Mammary epithelial cell (primary cell): ENCODE measurements at regions of chr16 and their contacts with region 1.

Region 1: GRCh38 chr16:54633943-54634362 is 296.7 kb upstream of the IRX5 start:
- DNase-seq: peak; percentile 43
- H3K4me3 ChIP-seq: no peak overlapping the region
- H3K27ac ChIP-seq: peak overlapping the region; percentile 2
- H3K4me1 ChIP-seq: no peaks in the 10 kb centered on the region
- H3K27me3 ChIP-seq: no peaks in the 10 kb centered on the region
- CTCF ChIP-seq: peak; percentile 80 to 91

Region 2: GRCh38 chr16:53773150-53773846 is 860.7 kb before region 1 on chr16:
- CTCF ChIA-PET with region 1: no interaction called
- dilution Hi-C with region 1: no loop called
- in situ Hi-C with region 1: no loop called
- intact Hi-C with region 1: loop called (anchors 5 kb)
- DNase-seq: peak; percentile 72
- H3K4me3 ChIP-seq: no peak overlapping the region
- H3K27ac ChIP-seq: peak overlapping the region; percentile 11
- H3K4me1 ChIP-seq: peaks cover 60% of the 10 kb centered on the region
- H3K27me3 ChIP-seq: no peaks in the 10 kb centered on the region
- CTCF ChIP-seq: peak; percentile 70 to 81

Region 3: DNA sequence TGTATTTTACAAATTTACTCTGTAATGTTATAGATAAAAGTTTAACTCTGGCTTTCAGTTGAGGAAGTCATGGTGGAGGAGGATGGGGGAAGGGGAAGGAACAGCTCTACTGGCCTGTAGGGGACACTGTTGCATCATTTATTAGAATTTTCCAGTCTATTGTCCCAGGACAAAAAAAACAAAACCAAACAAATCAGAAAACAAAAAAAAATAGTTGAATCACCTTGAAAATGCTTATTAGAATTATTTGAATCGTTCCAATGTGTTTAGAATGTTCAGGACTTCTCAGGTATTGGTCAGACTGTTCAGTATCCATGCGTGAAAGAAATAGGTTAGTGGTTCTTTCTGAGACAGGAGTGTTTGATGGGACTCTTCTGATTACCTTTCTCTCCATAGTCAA is 688.0 kb before region 1 on chr16:
- CTCF ChIA-PET with region 1: no interaction called
- dilution Hi-C with region 1: no loop called
- in situ Hi-C with region 1: no loop called
- intact Hi-C with region 1: loop called (anchors 5 kb)
- DNase-seq: peak; percentile 43
- H3K4me3 ChIP-seq: no peak overlapping the region
- H3K27ac ChIP-seq: no peak overlapping the region
- H3K4me1 ChIP-seq: peaks cover 3% of the 10 kb centered on the region
- H3K27me3 ChIP-seq: no peaks in the 10 kb centered on the region
- CTCF ChIP-seq: peak; percentile 83 to 94

Region 4: DNA sequence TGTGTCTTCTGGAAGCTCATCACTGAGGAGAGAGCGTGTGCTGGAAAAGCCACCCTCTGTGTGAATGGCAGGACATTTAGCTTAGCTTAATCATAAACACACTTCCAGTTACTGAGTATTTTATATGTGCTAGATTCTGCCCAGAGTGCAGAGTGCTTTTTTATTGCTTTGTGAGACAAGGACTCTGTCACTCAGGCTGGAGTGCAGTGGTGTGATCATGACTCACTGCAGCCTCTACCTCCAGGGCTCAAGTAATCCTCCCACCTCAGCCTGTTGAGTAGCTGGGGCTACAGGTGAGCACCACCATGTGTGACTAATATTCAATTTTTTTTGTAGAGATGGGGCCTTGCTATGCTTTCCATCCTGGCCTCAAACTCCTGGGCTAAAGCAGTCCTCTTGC is 286.0 kb before region 1 on chr16:
- CTCF ChIA-PET with region 1: no interaction called
- dilution Hi-C with region 1: no loop called
- in situ Hi-C with region 1: no loop called
- intact Hi-C with region 1: no loop called
- DNase-seq: peak; percentile 78
- H3K4me3 ChIP-seq: no peak overlapping the region
- H3K27ac ChIP-seq: no peak overlapping the region
- H3K4me1 ChIP-seq: peaks cover 9% of the 10 kb centered on the region
- H3K27me3 ChIP-seq: no peaks in the 10 kb centered on the region
- CTCF ChIP-seq: no peak

Region 5: GRCh38 chr16:54657058-54657708 is 23.2 kb after region 1 on chr16:
- CTCF ChIA-PET with region 1: no interaction called
- dilution Hi-C with region 1: no loop called
- in situ Hi-C with region 1: no loop called
- intact Hi-C with region 1: loop called (anchors 1 kb)
- DNase-seq: peak; percentile 99
- H3K4me3 ChIP-seq: no peak overlapping the region
- H3K27ac ChIP-seq: peak overlapping the region; percentile 62
- H3K4me1 ChIP-seq: peaks cover 35% of the 10 kb centered on the region
- H3K27me3 ChIP-seq: no peaks in the 10 kb centered on the region
- CTCF ChIP-seq: peak; percentile 21 to 42

Region 6: GRCh38 chr16:54817446-54817845 is 183.5 kb after region 1 on chr16:
- CTCF ChIA-PET with region 1: no interaction called
- dilution Hi-C with region 1: no loop called
- in situ Hi-C with region 1: loop called in 1 of 2 experiments (anchors 10 kb)
- intact Hi-C with region 1: loop called (anchors 1 kb)
- DNase-seq: peak; percentile 59
- H3K4me3 ChIP-seq: no peak overlapping the region
- H3K27ac ChIP-seq: no peak overlapping the region
- H3K4me1 ChIP-seq: peaks cover 2% of the 10 kb centered on the region
- H3K27me3 ChIP-seq: no peaks in the 10 kb centered on the region
- CTCF ChIP-seq: peak; percentile 56 to 83

Region 7: DNA sequence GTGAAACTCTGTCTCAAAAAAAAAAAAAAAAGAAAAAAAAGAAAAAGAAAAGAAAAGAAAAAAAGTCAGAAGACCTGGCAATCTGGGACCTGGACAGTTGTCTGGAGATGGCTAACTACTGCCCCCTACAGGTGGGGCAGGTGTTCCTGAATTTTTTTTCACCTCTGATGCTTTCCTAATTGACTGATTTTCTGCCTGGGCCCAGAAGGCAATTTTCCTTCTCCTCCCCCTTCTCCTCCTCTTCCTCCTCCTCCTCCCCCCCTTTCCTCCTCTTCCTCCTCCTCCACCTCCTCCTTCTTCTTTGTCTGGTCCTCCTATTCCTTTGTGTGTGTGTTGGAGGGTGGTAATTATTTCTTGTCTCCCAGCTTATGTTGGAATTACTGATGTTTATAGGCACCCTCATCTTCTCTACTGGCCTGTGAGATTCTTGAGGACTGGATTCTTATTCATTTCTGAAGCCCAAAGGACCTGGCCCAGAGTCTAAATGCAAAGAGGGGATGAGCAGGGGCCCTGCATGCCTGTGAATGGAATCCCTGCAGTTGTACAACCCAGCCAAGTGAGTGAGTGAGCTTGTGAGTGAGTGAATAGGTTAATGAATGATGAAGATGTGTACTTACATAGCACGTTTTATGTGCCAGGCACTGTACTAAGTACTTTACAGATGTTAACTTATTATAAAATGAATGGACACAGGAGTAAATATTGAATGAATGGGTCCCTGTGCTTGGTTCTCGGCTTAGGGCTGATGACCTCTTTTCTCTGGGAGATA is 323.6 kb after region 1 on chr16:
- CTCF ChIA-PET with region 1: no interaction called
- dilution Hi-C with region 1: no loop called
- in situ Hi-C with region 1: loop called in 1 of 2 experiments (anchors 10 kb)
- intact Hi-C with region 1: loop called (anchors 1 kb)
- DNase-seq: peak; percentile 43
- H3K4me3 ChIP-seq: no peak overlapping the region
- H3K27ac ChIP-seq: no peak overlapping the region
- H3K4me1 ChIP-seq: no peaks in the 10 kb centered on the region
- H3K27me3 ChIP-seq: no peaks in the 10 kb centered on the region
- CTCF ChIP-seq: peak; percentile 68 to 82

Region 8: DNA sequence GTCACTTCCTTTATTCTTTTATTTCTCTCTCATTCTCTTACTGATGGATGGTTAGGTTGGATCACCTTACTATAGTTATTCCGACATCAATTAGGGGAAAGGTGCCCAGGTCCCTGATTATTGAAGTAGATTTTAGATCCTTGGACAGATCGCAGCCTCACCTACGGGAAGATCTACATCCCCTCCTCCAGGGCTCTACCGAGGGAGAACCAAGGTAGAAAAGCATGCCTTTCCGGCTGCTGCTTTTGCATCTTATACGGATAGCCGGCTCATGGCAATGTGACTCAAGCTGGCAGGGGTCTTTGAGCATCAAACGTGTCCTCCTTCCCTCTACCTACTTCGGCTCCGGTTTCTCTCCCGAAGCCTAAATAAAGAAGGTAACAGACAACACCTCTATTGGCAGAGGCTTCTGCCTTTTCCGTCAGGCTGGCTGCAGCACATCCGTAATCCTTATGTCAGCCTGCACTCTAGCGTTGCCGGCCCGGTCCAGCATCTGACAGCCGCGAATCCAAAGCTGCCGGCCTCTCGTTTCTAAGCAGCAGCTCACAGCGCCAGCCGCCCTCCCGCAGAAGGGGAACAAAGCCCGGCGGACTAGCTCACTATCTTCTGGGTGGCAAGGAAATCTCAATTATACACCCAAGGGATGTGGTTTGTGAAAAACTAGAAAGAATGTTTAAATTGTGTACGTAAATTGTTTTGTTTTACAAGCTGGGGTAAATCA is 737.0 kb after region 1 on chr16:
- CTCF ChIA-PET with region 1: no interaction called
- dilution Hi-C with region 1: no loop called
- in situ Hi-C with region 1: loop called in 1 of 2 experiments (anchors 10 kb)
- intact Hi-C with region 1: loop called (anchors 10 kb)
- DNase-seq: peak; percentile 42
- H3K4me3 ChIP-seq: no peak overlapping the region
- H3K27ac ChIP-seq: no peak overlapping the region
- H3K4me1 ChIP-seq: peaks cover 17% of the 10 kb centered on the region
- H3K27me3 ChIP-seq: no peaks in the 10 kb centered on the region
- CTCF ChIP-seq: peak; percentile 42 to 71